Right ventricle myocardium superior (tissue), 1 donor: ENCODE measurements at regions of chr5 and their contacts with region 1.

Region 1: DNA sequence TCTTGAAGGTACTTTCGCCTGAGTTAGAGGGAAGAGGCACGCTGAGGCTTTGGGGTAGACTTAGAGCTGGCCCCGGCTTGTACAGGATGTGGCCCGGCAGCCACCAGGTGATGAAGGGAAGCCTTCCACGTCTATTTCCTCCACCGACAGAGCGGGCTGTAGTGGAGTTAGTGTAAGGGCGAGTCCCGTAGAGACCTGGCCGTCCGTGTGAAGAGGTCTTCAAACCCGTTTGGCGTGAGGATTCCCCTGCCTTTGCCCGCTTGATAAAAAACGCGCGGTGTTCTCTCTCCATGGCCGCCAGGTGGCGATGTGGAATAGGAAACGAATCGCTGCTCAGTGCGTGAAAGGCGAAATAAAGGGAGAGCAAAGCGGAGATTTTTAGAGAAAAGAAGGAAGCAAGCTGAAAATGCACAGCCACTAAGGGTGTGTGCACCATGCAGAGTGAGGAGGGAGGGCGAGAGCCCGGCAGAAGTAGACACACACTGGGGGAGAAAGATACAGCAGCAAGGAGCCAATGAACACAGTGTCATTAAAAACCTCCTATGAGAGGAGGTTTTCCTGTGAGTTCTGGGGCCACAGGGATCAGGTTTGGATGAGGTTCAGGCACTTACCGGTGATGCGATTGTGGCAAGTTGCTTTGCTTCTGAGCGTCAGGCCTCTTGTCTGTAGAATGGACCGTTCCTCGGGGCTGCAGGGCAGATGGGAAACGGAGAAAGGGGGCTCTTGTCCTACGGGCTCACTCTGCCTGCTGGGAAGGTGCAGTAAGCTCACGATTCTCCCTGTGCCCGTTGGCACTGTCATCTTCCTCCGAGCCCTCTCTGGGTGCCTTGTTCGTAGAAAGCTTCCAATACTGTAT is 34.2 kb downstream of the STC2 start:
- DNase-seq: peak; percentile 85
- ATAC-seq: peak; percentile 78

Region 2: GRCh38 chr5:173331956-173332479 is 38.0 kb after region 1 on chr5:
- intact Hi-C with region 1: loop called (anchors 1 kb)
- DNase-seq: peak; percentile 92
- ATAC-seq: peak; percentile 66

Region 3: GRCh38 chr5:173573126-173573960 is 279.3 kb after region 1 on chr5:
- intact Hi-C with region 1: loop called (anchors 10 kb)
- DNase-seq: peak; percentile 87
- ATAC-seq: peak; percentile 98